CD4-positive, alpha-beta memory T cell (primary cell): ENCODE measurements at regions of chr15 and their contacts with region 1.

Region 1: GRCh38 chr15:74906446-74907162 is at the start of gene FAM219B:
- DNase-seq: peak; percentile 67 to 80 (median 68)
- H3K4me3 ChIP-seq: peak within 1 kb of the TSS; percentile 61 to 94
- H3K4me3 Mint-ChIP-seq: peak within 1 kb of the TSS; percentile 96 to 100 (median 99)
- H3K27ac ChIP-seq: peak within 1 kb of the TSS; percentile 83
- H3K27ac Mint-ChIP-seq: peak within 1 kb of the TSS; percentile 92 to 99 (median 98)
- H3K4me1 ChIP-seq: peaks cover 32% of the 10 kb centered on the region
- H3K4me1 Mint-ChIP-seq: peaks cover 25 to 52% (median 39%) of the 10 kb centered on the region in 4 donors
- H3K27me3 ChIP-seq: no peaks in the 10 kb centered on the region
- H3K27me3 Mint-ChIP-seq: no peaks in the 10 kb centered on the region
- total RNA-seq, gene FAM219B: 101 to 117 TPM

Region 2: DNA sequence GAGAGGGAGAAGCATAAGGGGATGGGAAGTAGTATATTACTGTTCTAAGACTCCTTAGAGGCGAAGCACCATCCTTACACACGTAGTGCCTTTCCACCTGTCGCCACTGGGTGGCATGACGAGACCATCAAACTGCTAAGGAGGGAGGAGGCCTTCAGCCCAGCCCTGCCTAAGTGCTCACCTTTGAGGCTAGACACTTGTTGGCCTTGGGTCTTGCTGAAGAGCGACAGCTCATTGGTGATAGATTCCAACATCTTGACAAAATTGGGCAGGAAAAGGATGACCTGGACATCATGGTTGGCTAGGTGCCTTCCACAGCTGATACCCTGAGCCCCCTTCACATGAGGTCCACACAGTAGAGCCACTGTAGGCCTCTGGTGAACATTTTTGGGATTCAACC is 271.4 kb before region 1 on chr15:
- CTCF ChIA-PET with region 1: interaction called, 17 read pairs
- POLR2A ChIA-PET with region 1: no interaction called
- intact Hi-C with region 1: loop called (anchors 1 kb)
- DNase-seq: peak; percentile 68 to 70 (median 68)
- H3K4me3 ChIP-seq: no peak overlapping the region
- H3K4me3 Mint-ChIP-seq: no peak overlapping the region
- H3K27ac ChIP-seq: no peak overlapping the region
- H3K27ac Mint-ChIP-seq: peak overlapping the region in 3 of 7 donors; percentile 5 to 79 (median 14)
- H3K4me1 ChIP-seq: no peaks in the 10 kb centered on the region
- H3K4me1 Mint-ChIP-seq: peaks cover 1 to 6% (median 4%) of the 10 kb centered on the region in 4 donors
- H3K27me3 ChIP-seq: no peaks in the 10 kb centered on the region
- H3K27me3 Mint-ChIP-seq: no peaks in the 10 kb centered on the region

Region 3: GRCh38 chr15:74787251-74788041 is 119.2 kb before region 1 on chr15:
- CTCF ChIA-PET with region 1: interaction called, 4 read pairs
- POLR2A ChIA-PET with region 1: interaction called, 19 read pairs
- intact Hi-C with region 1: no loop called
- DNase-seq: peak; percentile 94 to 99 (median 96)
- H3K4me3 ChIP-seq: peak overlapping the region; percentile 55 to 69
- H3K4me3 Mint-ChIP-seq: peak overlapping the region; percentile 85 to 96 (median 92)
- H3K27ac ChIP-seq: peak overlapping the region; percentile 86
- H3K27ac Mint-ChIP-seq: peak overlapping the region; percentile 95 to 99 (median 98)
- H3K4me1 ChIP-seq: peaks cover 89% of the 10 kb centered on the region
- H3K4me1 Mint-ChIP-seq: peaks cover 39 to 97% (median 66%) of the 10 kb centered on the region in 4 donors
- H3K27me3 ChIP-seq: no peaks in the 10 kb centered on the region
- H3K27me3 Mint-ChIP-seq: no peaks in the 10 kb centered on the region

Region 4: GRCh38 chr15:74808073-74808755 is 98.4 kb before region 1 on chr15:
- CTCF ChIA-PET with region 1: interaction called, 14 read pairs
- POLR2A ChIA-PET with region 1: interaction called, 4 read pairs
- intact Hi-C with region 1: no loop called
- DNase-seq: no peak
- H3K4me3 ChIP-seq: no peak overlapping the region
- H3K4me3 Mint-ChIP-seq: no peak overlapping the region
- H3K27ac ChIP-seq: peak overlapping the region; percentile 18
- H3K27ac Mint-ChIP-seq: peak overlapping the region; percentile 64 to 96 (median 81)
- H3K4me1 ChIP-seq: peaks cover 15% of the 10 kb centered on the region
- H3K4me1 Mint-ChIP-seq: peaks cover 22 to 40% (median 30%) of the 10 kb centered on the region in 4 donors
- H3K27me3 ChIP-seq: no peaks in the 10 kb centered on the region
- H3K27me3 Mint-ChIP-seq: no peaks in the 10 kb centered on the region

Region 5: GRCh38 chr15:74850393-74850792 is 56.2 kb before region 1 on chr15:
- CTCF ChIA-PET with region 1: interaction called, 136 read pairs
- POLR2A ChIA-PET with region 1: interaction called, 106 read pairs
- intact Hi-C with region 1: loop called (anchors 1 kb)
- DNase-seq: no peak
- H3K4me3 ChIP-seq: no peak overlapping the region
- H3K4me3 Mint-ChIP-seq: no peak overlapping the region
- H3K27ac ChIP-seq: no peak overlapping the region
- H3K27ac Mint-ChIP-seq: peak overlapping the region in 3 of 7 donors; percentile 6 to 35 (median 24)
- H3K4me1 ChIP-seq: peaks cover 10% of the 10 kb centered on the region
- H3K4me1 Mint-ChIP-seq: peaks cover 8 to 17% (median 13%) of the 10 kb centered on the region in 4 donors
- H3K27me3 ChIP-seq: no peaks in the 10 kb centered on the region
- H3K27me3 Mint-ChIP-seq: no peaks in the 10 kb centered on the region

Region 6: DNA sequence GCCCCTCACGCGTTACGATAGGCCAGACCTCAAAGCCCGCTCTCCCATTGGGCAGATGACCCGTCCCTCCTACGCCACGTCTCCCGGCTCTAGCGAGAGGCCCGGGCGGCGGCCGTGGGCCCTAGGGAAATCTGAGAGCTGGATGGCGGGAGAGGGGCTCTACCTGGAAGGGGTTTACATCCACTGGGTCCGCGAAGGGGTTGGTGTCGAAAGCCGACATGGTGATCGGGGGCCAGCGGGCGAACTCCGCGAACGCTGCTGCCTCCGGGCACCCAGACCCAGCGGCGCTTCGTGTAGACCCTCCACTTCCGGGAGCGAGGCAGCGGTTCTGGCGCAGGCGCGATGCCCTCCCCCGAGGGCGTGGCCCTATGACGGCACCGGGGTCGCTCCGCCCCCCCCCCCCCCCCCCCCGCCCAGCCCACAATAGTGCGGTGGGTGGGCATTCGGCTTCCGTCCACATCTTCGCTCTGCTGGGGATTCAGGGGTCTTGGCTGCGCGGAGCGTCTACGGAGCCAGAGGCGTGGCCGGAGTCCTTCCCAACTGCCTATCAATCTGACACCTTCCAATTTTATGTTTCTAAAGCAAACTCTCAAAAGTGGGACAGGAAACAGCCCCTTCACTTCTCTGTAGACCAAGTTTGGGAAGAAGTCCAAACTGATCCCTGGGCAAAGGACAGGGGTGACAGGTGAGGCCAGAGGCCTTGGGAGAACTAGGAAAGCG is 33.4 kb before region 1 on chr15 and contains the start of gene SCAMP2:
- CTCF ChIA-PET with region 1: interaction called, 79 read pairs
- POLR2A ChIA-PET with region 1: interaction called, 32 read pairs
- intact Hi-C with region 1: loop called (anchors 1 kb)
- DNase-seq: peak; percentile 92 to 95 (median 94)
- H3K4me3 ChIP-seq: peak within 1 kb of the TSS; percentile 52 to 99
- H3K4me3 Mint-ChIP-seq: peak within 1 kb of the TSS; percentile 94 to 100 (median 99)
- H3K27ac ChIP-seq: peak within 1 kb of the TSS; percentile 93
- H3K27ac Mint-ChIP-seq: peak within 1 kb of the TSS; percentile 96 to 99 (median 98)
- H3K4me1 ChIP-seq: peaks cover 53% of the 10 kb centered on the region
- H3K4me1 Mint-ChIP-seq: peaks cover 33 to 57% (median 44%) of the 10 kb centered on the region in 4 donors
- H3K27me3 ChIP-seq: no peaks in the 10 kb centered on the region
- H3K27me3 Mint-ChIP-seq: no peaks in the 10 kb centered on the region
- total RNA-seq, gene SCAMP2: 132 to 138 TPM

Region 7: DNA sequence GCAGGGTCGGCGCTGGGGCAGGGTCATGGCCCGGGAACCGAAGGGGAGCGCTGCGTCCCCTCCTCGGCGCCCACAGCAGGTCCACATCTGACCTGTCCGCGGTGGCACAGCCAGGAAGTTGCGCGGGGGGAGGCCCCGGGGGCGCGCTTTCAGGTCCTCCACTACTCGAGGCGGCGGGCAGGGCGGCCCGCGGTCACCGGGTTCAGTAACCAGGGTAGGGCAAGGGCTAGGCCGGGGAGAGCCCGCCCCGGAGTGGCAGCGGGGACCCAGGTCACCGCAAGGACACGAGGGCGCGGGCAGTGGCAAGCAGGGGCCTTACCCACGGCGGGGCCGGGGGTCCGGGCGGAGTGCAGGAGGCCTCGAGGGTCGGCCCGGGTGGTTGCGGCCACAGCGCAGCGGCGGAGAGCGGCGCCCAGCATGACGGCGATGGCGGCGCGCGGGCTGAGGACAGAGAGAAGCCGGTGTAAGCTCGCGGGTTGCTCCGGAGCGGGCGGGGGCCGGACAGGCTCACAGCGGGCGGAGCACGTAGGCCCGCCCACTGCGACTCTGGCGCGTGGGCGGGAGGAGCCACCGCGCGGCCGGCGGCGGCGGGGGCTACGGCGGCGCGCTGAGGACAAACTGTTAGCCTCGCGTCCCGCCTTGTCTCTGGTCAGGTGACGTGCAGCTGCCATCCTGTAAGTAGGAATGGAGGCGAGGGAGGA is 31.1 kb after region 1 on chr15 and contains the start of gene COX5A:
- CTCF ChIA-PET with region 1: interaction called, 7 read pairs
- POLR2A ChIA-PET with region 1: interaction called, 17 read pairs
- intact Hi-C with region 1: loop called (anchors 1 kb)
- DNase-seq: peak; percentile 92 to 95 (median 93)
- H3K4me3 ChIP-seq: peak within 1 kb of the TSS; percentile 41 to 96
- H3K4me3 Mint-ChIP-seq: peak within 1 kb of the TSS; percentile 88 to 95 (median 94)
- H3K27ac ChIP-seq: peak within 1 kb of the TSS; percentile 79
- H3K27ac Mint-ChIP-seq: peak within 1 kb of the TSS; percentile 88 to 96 (median 92)
- H3K4me1 ChIP-seq: peaks cover 38% of the 10 kb centered on the region
- H3K4me1 Mint-ChIP-seq: peaks cover 21 to 40% (median 28%) of the 10 kb centered on the region in 4 donors
- H3K27me3 ChIP-seq: no peaks in the 10 kb centered on the region
- H3K27me3 Mint-ChIP-seq: no peaks in the 10 kb centered on the region
- total RNA-seq, gene COX5A: 66.8 to 74.4 TPM